ENCODE measurements at regions of chr16 and their contacts with region 1.

Region 1: GRCh38 chr16:8552487-8553221 is 37.7 kb downstream of the TMEM114 start:
- DNase-seq: no peak
- H3K4me3 ChIP-seq: no peak overlapping the region
- H3K27ac ChIP-seq: no peak overlapping the region
- H3K4me1 ChIP-seq: no peaks in the 10 kb centered on the region
- H3K27me3 ChIP-seq: no peaks in the 10 kb centered on the region
- CTCF ChIP-seq: no peak

Region 2: GRCh38 chr16:8243981-8244380 is 308.7 kb before region 1 on chr16:
- intact Hi-C with region 1: loop called (anchors 10 kb)
- DNase-seq: no peak
- H3K4me3 ChIP-seq: no peak overlapping the region
- H3K27ac ChIP-seq: no peak overlapping the region
- H3K4me1 ChIP-seq: no peaks in the 10 kb centered on the region
- H3K27me3 ChIP-seq: no peaks in the 10 kb centered on the region
- CTCF ChIP-seq: no peak

Measured in colonic mucosa (tissue), 4 donors.